ENCODE measurements at regions of chr14 and their contacts with region 1.

Region 1: GRCh38 chr14:94801225-94801624 is 31.3 kb upstream of the GSC start:
- DNase-seq: no peak
- H3K4me3 ChIP-seq: no peak overlapping the region
- H3K27ac ChIP-seq: no peak overlapping the region
- H3K4me1 ChIP-seq: no peaks in the 10 kb centered on the region
- H3K27me3 ChIP-seq: no peaks in the 10 kb centered on the region; the same call in none of the 2 replicates
- CTCF ChIP-seq: no peak

Region 2: DNA sequence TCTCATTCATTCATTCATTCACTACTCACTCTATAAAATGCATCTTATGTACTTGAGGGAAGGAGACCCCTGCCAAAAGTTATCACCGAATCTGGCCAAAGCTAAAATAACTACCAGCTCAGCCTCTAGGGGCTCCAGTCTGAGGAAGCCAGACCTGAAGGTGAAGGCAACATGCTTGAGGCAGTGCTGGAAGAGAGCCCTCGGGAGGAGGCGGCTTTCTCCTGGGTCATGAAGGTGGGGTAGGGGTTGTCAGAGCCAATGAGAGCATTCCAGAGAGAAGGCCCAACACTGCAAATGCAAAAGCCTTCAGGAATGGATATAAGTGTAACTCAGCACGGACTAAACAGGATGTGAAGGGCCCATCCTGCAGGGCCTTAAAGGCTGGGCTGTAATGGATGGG is 93.7 kb before region 1 on chr14:
- CTCF ChIA-PET with region 1: no interaction called
- POLR2A ChIA-PET with region 1: no interaction called
- intact Hi-C with region 1: no loop called
- DNase-seq: no peak
- H3K4me3 ChIP-seq: no peak overlapping the region
- H3K27ac ChIP-seq: no peak overlapping the region
- H3K4me1 ChIP-seq: no peaks in the 10 kb centered on the region
- H3K27me3 ChIP-seq: peaks cover 29% of the 10 kb centered on the region; the same call in 1 of the 2 replicates
- CTCF ChIP-seq: no peak

Region 3: DNA sequence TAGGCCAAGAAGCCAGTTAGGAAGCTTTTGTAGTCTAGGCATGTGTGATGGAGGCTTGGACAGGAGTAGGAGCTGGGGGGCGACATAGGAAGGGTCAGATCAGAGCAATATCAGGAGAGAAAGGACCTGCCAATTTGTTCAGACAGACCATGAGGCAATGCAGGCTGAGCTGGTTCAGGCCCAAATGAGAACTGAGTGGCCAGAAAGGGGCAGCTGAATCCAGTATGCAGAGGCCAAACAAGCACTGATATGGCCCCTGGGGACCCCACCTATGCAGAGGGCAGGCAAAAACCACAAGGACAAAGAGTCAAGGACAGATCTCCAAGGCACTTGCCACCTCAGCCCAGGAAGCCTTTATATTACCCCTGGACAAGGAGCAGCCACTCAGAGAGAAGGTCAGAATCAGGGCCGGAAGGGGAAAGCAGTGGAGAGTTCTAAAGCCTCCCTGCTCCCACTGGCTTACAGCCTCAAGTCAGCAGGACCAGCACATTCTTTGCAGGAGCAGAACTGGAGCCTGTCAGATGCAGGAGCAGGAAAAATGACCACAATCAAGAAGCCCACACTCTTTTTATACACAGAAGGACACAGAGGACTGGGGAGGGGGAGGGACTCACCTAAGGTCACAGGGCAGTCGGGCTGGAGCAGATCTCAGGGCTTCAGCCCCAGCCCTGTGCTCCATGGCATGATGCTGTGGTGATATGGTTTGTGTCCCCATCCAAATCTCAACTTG is 481.3 kb after region 1 on chr14:
- CTCF ChIA-PET with region 1: no interaction called
- POLR2A ChIA-PET with region 1: interaction called, 11 read pairs
- intact Hi-C with region 1: no loop called
- DNase-seq: no peak
- H3K4me3 ChIP-seq: no peak overlapping the region
- H3K27ac ChIP-seq: no peak overlapping the region
- H3K4me1 ChIP-seq: no peaks in the 10 kb centered on the region
- H3K27me3 ChIP-seq: no peaks in the 10 kb centered on the region
- CTCF ChIP-seq: no peak